GM12878 (cell line): ENCODE measurements at regions of chr11 and their contacts with region 1.

Region 1: GRCh38 chr11:59560702-59561469 is 49.5 kb downstream of the OR4D9 start:
- DNase-seq: peak; percentile 51
- ATAC-seq: peak; percentile 56
- H3K4me3 ChIP-seq: peak overlapping the region; percentile 59
- H3K27ac ChIP-seq: peak overlapping the region; percentile 73
- H3K4me1 ChIP-seq: peaks cover 4% of the 10 kb centered on the region; the same call in 1 of the 2 replicates
- H3K27me3 ChIP-seq: no peaks in the 10 kb centered on the region
- CTCF ChIP-seq: no peak
- EP300 ChIP-seq: no peak
- POLR2A ChIP-seq: peak; percentile 56
- RAD21 ChIP-seq: no peak

Region 2: DNA sequence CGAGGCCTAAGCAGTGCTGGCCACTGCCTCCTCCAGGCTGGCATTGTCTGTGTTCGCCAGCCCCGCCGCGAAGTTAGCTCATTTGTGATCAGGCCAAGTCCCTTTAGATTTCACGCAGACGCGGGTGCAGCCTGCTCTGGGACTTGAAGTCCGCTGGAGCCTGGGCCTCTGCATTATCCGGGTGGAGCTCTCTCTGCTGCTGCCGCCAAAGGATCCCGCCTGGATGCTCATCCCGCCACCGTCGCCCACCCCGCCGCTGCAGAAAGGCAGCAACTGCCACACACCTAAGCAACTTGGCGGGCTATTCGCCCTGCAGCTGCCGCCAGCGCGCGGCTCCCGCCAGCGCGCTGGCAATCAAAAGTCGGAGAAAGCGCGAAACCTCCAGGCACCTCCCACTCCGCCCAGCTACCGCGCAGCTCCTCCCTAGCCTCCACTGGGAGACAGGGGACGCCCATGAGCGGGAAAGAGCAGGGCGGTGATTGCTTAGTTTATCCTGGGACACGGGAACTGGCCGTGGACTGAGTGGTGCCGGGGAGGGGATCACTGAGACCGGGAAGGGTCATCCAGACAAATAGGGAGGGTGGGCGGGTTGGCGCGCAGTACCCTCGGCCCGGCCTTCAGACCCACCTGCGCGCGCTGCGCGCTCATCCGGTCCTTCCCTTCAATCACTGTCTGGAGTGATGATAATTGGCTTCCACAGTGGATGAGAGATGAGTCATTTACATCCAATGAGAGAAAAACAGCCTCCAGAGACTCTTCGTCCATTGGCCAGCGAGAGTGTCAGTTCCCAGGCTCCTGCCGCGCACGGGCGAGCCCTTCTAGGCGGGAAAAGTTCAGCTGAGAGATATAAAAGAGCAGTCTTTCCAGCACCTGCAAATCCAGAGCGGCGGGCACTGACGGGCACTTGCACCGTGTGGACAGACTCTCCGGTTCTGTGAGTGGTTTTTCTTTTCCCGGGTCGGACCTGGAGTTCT is 454.2 kb before region 1 on chr11 and contains the start of gene FAM111B:
- CTCF ChIA-PET with region 1: no interaction called
- POLR2A ChIA-PET with region 1: no interaction called
- RAD21 ChIA-PET with region 1: no interaction called
- SMC1A ChIA-PET with region 1: no interaction called
- in situ Hi-C with region 1: loop called (anchors 5 kb)
- intact Hi-C with region 1: no loop called
- DNase-seq: peak; percentile 84
- ATAC-seq: peak; percentile 85
- H3K4me3 ChIP-seq: peak within 1 kb of the TSS; percentile 79
- H3K27ac ChIP-seq: peak within 1 kb of the TSS; percentile 89
- H3K4me1 ChIP-seq: peaks cover 7% of the 10 kb centered on the region
- H3K27me3 ChIP-seq: no peaks in the 10 kb centered on the region
- CTCF ChIP-seq: no peak
- EP300 ChIP-seq: no peak
- POLR2A ChIP-seq: peak; percentile 79
- RAD21 ChIP-seq: no peak
- polyA plus RNA-seq, gene FAM111B: 42.0 to 65.3 TPM

Region 3: GRCh38 chr11:59463190-59463641 is 97.7 kb before region 1 on chr11:
- CTCF ChIA-PET with region 1: no interaction called
- POLR2A ChIA-PET with region 1: no interaction called
- RAD21 ChIA-PET with region 1: no interaction called
- SMC1A ChIA-PET with region 1: no interaction called
- in situ Hi-C with region 1: no loop called
- intact Hi-C with region 1: no loop called
- DNase-seq: no peak
- ATAC-seq: no peak
- H3K4me3 ChIP-seq: no peak overlapping the region
- H3K27ac ChIP-seq: no peak overlapping the region
- H3K4me1 ChIP-seq: no peaks in the 10 kb centered on the region
- H3K27me3 ChIP-seq: no peaks in the 10 kb centered on the region
- CTCF ChIP-seq: no peak
- EP300 ChIP-seq: no peak
- POLR2A ChIP-seq: no peak
- RAD21 ChIP-seq: no peak

Region 4: DNA sequence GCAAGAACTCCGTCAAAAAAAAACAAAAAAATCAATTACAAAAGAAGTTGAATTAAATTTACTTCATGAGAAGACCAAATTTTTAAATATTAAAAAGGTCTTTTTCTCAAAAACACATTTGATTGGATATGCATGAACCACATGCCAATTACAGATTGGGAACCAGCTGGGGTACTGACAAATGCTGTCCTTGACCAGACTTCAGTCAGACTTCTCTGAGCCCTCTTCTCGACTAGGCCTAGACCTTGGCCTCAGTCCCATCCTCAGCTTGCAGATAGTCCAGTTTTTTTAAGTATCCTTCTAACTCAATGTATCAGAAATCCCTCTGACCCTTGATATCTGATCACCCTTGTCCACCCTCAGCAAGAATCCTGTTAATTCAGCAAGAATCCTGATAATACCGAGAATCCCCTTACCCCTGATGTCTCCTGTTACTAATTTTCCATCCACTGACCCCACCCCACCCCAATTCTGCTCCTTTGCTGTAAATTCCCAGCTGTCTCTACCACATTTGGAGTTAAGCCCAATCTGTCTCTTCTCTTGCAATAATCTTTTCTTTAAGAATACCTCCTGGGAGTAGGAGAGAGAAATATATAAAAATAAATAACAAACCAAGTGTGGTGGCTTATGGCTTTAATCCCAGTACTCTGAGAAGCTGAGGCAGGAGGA is 18.6 kb before region 1 on chr11:
- CTCF ChIA-PET with region 1: interaction called, 12 read pairs
- POLR2A ChIA-PET with region 1: interaction called, 3 read pairs
- RAD21 ChIA-PET with region 1: interaction called, 5 read pairs
- SMC1A ChIA-PET with region 1: interaction called, 8 read pairs
- in situ Hi-C with region 1: no loop called
- intact Hi-C with region 1: no loop called
- DNase-seq: no peak
- ATAC-seq: no peak
- H3K4me3 ChIP-seq: no peak overlapping the region
- H3K27ac ChIP-seq: no peak overlapping the region
- H3K4me1 ChIP-seq: no peaks in the 10 kb centered on the region
- H3K27me3 ChIP-seq: peaks cover 0 to 1% of the 10 kb centered on the region in 2 experiments; a peak in 1 of 4 replicates
- CTCF ChIP-seq: no peak
- EP300 ChIP-seq: no peak
- POLR2A ChIP-seq: no peak
- RAD21 ChIP-seq: no peak

Region 5: GRCh38 chr11:59615637-59616395 is 54.9 kb after region 1 on chr11 and contains the start of gene OSBP:
- CTCF ChIA-PET with region 1: interaction called, 5 read pairs
- POLR2A ChIA-PET with region 1: interaction called, 12 read pairs
- RAD21 ChIA-PET with region 1: interaction called, 7 read pairs
- SMC1A ChIA-PET with region 1: interaction called, 21 read pairs
- in situ Hi-C with region 1: no loop called
- intact Hi-C with region 1: loop called (anchors 1 kb)
- DNase-seq: peak; percentile 100
- ATAC-seq: peak; percentile 93
- H3K4me3 ChIP-seq: peak within 1 kb of the TSS; percentile 91
- H3K27ac ChIP-seq: peak within 1 kb of the TSS; percentile 69
- H3K4me1 ChIP-seq: no peaks in the 10 kb centered on the region; the same call in none of the 2 replicates
- H3K27me3 ChIP-seq: no peaks in the 10 kb centered on the region
- CTCF ChIP-seq: no peak
- EP300 ChIP-seq: no peak
- POLR2A ChIP-seq: peak; percentile 89
- RAD21 ChIP-seq: no peak
- polyA plus RNA-seq, gene OSBP: 9.8 to 10.7 TPM

Region 6: GRCh38 chr11:59810189-59810910 is 249.5 kb after region 1 on chr11 and contains the start of gene MRPL16:
- CTCF ChIA-PET with region 1: no interaction called
- POLR2A ChIA-PET with region 1: no interaction called
- RAD21 ChIA-PET with region 1: no interaction called
- SMC1A ChIA-PET with region 1: no interaction called
- in situ Hi-C with region 1: no loop called
- intact Hi-C with region 1: loop called (anchors 5 kb)
- DNase-seq: peak; percentile 69
- ATAC-seq: peak; percentile 99
- H3K4me3 ChIP-seq: peak within 1 kb of the TSS; percentile 87
- H3K27ac ChIP-seq: peak within 1 kb of the TSS; percentile 67
- H3K4me1 ChIP-seq: no peaks in the 10 kb centered on the region; the same call in 1 of the 2 replicates
- H3K27me3 ChIP-seq: no peaks in the 10 kb centered on the region
- CTCF ChIP-seq: peak; percentile 8 to 44 (median 41); a peak in 5 of 6 replicates
- EP300 ChIP-seq: no peak
- POLR2A ChIP-seq: peak; percentile 95
- RAD21 ChIP-seq: no peak
- polyA plus RNA-seq, gene MRPL16: 38.2 to 75.0 TPM